Tibial artery (tissue), 4 donors: ENCODE measurements at regions of chr12 and their contacts with region 1.

Region 1: DNA sequence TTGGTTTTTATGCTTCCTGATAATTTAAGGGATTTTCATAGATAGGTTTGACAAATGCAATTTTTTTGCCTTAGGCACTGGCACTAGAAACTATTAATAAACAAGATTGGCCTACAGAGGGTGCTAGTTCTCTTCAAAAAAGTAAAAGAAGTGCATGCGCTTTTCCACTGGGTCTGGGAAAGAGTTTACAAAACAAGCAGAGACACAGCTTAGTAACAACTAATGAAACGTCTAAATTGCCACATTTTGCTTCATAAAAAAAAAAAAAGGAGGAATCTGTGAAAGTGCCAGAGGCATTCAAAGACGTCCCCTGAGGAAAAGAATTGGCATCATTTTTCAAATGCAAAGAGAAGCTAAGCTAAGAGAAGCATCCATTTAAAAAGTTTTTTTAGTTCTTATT is 58.3 kb upstream of the EEA1 start:
- DNase-seq: no peak
- H3K4me3 ChIP-seq: no peak overlapping the region
- H3K27ac ChIP-seq: peak overlapping the region; percentile 31 to 38
- H3K4me1 ChIP-seq: peaks cover 0 to 17% (median 4%) of the 10 kb centered on the region in 4 donors
- H3K27me3 ChIP-seq: no peaks in the 10 kb centered on the region
- CTCF ChIP-seq: peak; percentile 61 to 84

Region 2: GRCh38 chr12:93397412-93397811 is 410.1 kb after region 1 on chr12:
- intact Hi-C with region 1: loop called (anchors 5 kb)
- DNase-seq: no peak
- H3K4me3 ChIP-seq: no peak overlapping the region
- H3K27ac ChIP-seq: no peak overlapping the region
- H3K4me1 ChIP-seq: peaks cover 0 to 18% (median 0%) of the 10 kb centered on the region in 4 donors
- H3K27me3 ChIP-seq: no peaks in the 10 kb centered on the region
- CTCF ChIP-seq: no peak

Region 3: GRCh38 chr12:93419388-93420034 is 432.1 kb after region 1 on chr12:
- intact Hi-C with region 1: loop called (anchors 5 kb)
- DNase-seq: no peak
- H3K4me3 ChIP-seq: peak overlapping the region in 1 of 2 donors; percentile 15
- H3K27ac ChIP-seq: no peak overlapping the region
- H3K4me1 ChIP-seq: peaks cover 0 to 65% (median 13%) of the 10 kb centered on the region in 4 donors
- H3K27me3 ChIP-seq: no peaks in the 10 kb centered on the region
- CTCF ChIP-seq: peak; percentile 59 to 78